ENCODE measurements at regions of chr12 and their contacts with region 1.

Region 1: DNA sequence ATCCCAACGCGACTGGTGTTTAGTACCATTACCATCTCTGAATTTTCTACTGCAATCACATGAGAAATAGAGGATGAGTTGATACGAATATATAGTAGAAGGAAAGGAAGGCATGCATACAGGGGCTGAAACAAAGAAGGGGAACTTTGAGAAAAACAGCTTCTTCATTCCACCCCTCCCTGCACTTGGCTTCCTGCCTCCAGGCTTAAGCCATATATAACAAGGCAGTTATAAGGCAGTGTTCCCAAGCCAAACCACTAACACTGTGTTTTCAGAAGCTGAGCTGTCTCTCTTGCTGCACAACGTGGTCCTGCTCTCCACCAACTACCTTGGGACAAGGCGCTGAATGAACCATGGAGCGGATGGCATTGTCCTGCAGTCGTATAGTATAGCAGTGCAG is 11.0 kb downstream of the LETMD1 start:
- DNase-seq: no peak
- H3K4me3 ChIP-seq: no peak overlapping the region
- H3K4me3 Mint-ChIP-seq: no peak overlapping the region
- H3K27ac Mint-ChIP-seq: no peak overlapping the region
- H3K4me1 ChIP-seq: peaks cover 9% of the 10 kb centered on the region
- H3K4me1 Mint-ChIP-seq: no peaks in the 10 kb centered on the region
- H3K27me3 ChIP-seq: no peaks in the 10 kb centered on the region
- H3K27me3 Mint-ChIP-seq: no peaks in the 10 kb centered on the region
- CTCF ChIP-seq: no peak

Region 2: DNA sequence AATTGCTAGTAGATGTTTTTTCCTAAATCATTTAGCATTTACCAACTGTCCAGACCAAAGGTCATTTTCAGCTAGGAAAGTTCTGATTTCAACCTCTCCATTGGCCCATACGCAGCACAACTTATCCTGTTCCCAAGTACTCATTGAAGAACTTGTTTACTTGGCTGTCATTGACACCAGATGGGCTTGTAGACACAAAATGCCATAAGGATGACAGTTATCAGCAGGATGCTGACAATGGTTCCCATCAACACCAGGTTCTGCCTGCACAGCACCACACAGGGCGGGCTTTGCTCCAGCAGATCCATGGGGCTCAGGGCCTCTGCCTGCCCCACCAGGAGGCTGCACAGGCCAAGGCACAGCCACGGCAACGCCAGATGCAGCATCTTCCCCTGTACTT is 252.9 kb before region 1 on chr12:
- CTCF ChIA-PET with region 1: no interaction called
- POLR2A ChIA-PET with region 1: no interaction called
- intact Hi-C with region 1: no loop called
- DNase-seq: no peak
- H3K4me3 ChIP-seq: no peak overlapping the region
- H3K4me3 Mint-ChIP-seq: no peak overlapping the region
- H3K27ac Mint-ChIP-seq: no peak overlapping the region
- H3K4me1 ChIP-seq: no peaks in the 10 kb centered on the region
- H3K4me1 Mint-ChIP-seq: no peaks in the 10 kb centered on the region
- H3K27me3 ChIP-seq: no peaks in the 10 kb centered on the region
- H3K27me3 Mint-ChIP-seq: no peaks in the 10 kb centered on the region
- CTCF ChIP-seq: no peak

Region 3: GRCh38 chr12:51020448-51021182 is 38.5 kb before region 1 on chr12:
- CTCF ChIA-PET with region 1: no interaction called
- POLR2A ChIA-PET with region 1: no interaction called
- intact Hi-C with region 1: no loop called
- DNase-seq: no peak
- H3K4me3 ChIP-seq: no peak overlapping the region
- H3K4me3 Mint-ChIP-seq: no peak overlapping the region
- H3K27ac Mint-ChIP-seq: no peak overlapping the region
- H3K4me1 ChIP-seq: peaks cover 17% of the 10 kb centered on the region
- H3K4me1 Mint-ChIP-seq: peaks cover 20% of the 10 kb centered on the region
- H3K27me3 ChIP-seq: no peaks in the 10 kb centered on the region
- H3K27me3 Mint-ChIP-seq: no peaks in the 10 kb centered on the region
- CTCF ChIP-seq: no peak

Region 4: GRCh38 chr12:51036279-51036678 is 22.8 kb before region 1 on chr12:
- CTCF ChIA-PET with region 1: no interaction called
- POLR2A ChIA-PET with region 1: no interaction called
- intact Hi-C with region 1: no loop called
- DNase-seq: no peak
- H3K4me3 ChIP-seq: no peak overlapping the region
- H3K4me3 Mint-ChIP-seq: no peak overlapping the region
- H3K27ac Mint-ChIP-seq: no peak overlapping the region
- H3K4me1 ChIP-seq: no peaks in the 10 kb centered on the region
- H3K4me1 Mint-ChIP-seq: no peaks in the 10 kb centered on the region
- H3K27me3 ChIP-seq: no peaks in the 10 kb centered on the region
- H3K27me3 Mint-ChIP-seq: no peaks in the 10 kb centered on the region
- CTCF ChIP-seq: no peak

Region 5: DNA sequence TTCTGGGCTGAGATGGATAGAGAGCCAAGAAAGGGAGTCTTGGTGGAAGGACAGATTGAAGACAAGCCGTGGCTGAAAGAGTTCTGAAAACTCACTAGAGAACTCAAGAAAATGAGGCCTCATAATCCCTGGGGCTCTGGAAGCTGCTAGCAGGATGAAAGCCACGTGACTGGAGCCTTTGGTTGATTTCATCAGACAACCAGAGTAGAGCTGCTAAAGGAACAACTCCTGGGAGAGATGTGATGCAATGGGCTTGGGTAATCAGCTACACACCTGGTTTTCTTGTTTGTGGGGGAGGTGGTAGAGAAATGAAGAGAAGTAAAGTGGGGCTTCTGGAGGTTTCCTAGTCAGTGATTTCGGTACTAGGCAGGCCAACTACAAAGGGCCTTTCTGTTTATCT is 10.9 kb after region 1 on chr12:
- CTCF ChIA-PET with region 1: interaction called, 3 read pairs
- POLR2A ChIA-PET with region 1: no interaction called
- intact Hi-C with region 1: loop called (anchors 1 kb)
- DNase-seq: peak; percentile 73 to 87
- H3K4me3 ChIP-seq: no peak overlapping the region
- H3K4me3 Mint-ChIP-seq: no peak overlapping the region
- H3K27ac Mint-ChIP-seq: peak overlapping the region; percentile 79
- H3K4me1 ChIP-seq: peaks cover 10% of the 10 kb centered on the region; the same call in 1 of the 2 replicates
- H3K4me1 Mint-ChIP-seq: peaks cover 16% of the 10 kb centered on the region
- H3K27me3 ChIP-seq: no peaks in the 10 kb centered on the region
- H3K27me3 Mint-ChIP-seq: no peaks in the 10 kb centered on the region
- CTCF ChIP-seq: no peak

Region 6: GRCh38 chr12:51108136-51108535 is 49.0 kb after region 1 on chr12:
- CTCF ChIA-PET with region 1: no interaction called
- POLR2A ChIA-PET with region 1: no interaction called
- intact Hi-C with region 1: loop called (anchors 2 kb)
- DNase-seq: no peak
- H3K4me3 ChIP-seq: no peak overlapping the region
- H3K4me3 Mint-ChIP-seq: no peak overlapping the region
- H3K27ac Mint-ChIP-seq: no peak overlapping the region
- H3K4me1 ChIP-seq: no peaks in the 10 kb centered on the region
- H3K4me1 Mint-ChIP-seq: no peaks in the 10 kb centered on the region
- H3K27me3 ChIP-seq: no peaks in the 10 kb centered on the region
- H3K27me3 Mint-ChIP-seq: no peaks in the 10 kb centered on the region
- CTCF ChIP-seq: no peak

Region 7: GRCh38 chr12:51377099-51377984 is 318.3 kb after region 1 on chr12:
- CTCF ChIA-PET with region 1: no interaction called
- POLR2A ChIA-PET with region 1: no interaction called
- intact Hi-C with region 1: no loop called
- DNase-seq: no peak
- H3K4me3 ChIP-seq: no peak overlapping the region
- H3K4me3 Mint-ChIP-seq: no peak overlapping the region
- H3K27ac Mint-ChIP-seq: no peak overlapping the region
- H3K4me1 ChIP-seq: peaks cover 7% of the 10 kb centered on the region; the same call in 1 of the 2 replicates
- H3K4me1 Mint-ChIP-seq: peaks cover 4% of the 10 kb centered on the region
- H3K27me3 ChIP-seq: no peaks in the 10 kb centered on the region
- H3K27me3 Mint-ChIP-seq: no peaks in the 10 kb centered on the region
- CTCF ChIP-seq: no peak

Measured in Caco-2 (cell line).